ENCODE measurements at regions of chr2 and their contacts with region 1.

Region 1: GRCh38 chr2:176638167-176639015 is 369.1 kb downstream of the MTX2 start:
- DNase-seq: peak in 1 of 2 experiments; percentile 78
- H3K4me3 ChIP-seq: peak overlapping the region; percentile 37; the same call in 1 of the 2 replicates
- H3K27ac ChIP-seq: no peak overlapping the region
- H3K4me1 ChIP-seq: no peaks in the 10 kb centered on the region
- H3K27me3 ChIP-seq: no peaks in the 10 kb centered on the region; the same call in 1 of the 2 replicates
- CTCF ChIP-seq: peak; percentile 81

Region 2: DNA sequence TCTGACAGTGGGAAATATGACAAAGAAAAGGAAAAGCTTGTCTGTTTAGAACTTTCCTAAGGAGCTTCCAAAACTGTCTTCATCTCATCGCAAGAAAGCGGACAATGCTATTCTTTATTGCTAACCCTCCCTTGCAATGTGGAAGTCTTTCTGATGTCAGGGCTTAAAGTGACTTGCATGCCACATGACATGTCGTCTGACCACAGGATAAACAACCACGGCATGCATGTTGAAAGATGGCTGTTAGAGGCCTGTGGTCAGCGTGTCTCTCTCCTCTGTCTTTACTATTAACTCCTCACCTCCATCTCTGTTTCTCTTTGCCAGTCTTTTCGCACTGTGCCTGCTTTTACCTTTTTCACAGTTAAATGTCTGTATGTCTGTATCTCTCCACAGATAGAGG is 1026.1 kb before region 1 on chr2:
- CTCF ChIA-PET with region 1: no interaction called
- POLR2A ChIA-PET with region 1: no interaction called
- intact Hi-C with region 1: no loop called
- DNase-seq: no peak
- H3K4me3 ChIP-seq: no peak overlapping the region
- H3K27ac ChIP-seq: no peak overlapping the region
- H3K4me1 ChIP-seq: no peaks in the 10 kb centered on the region
- H3K27me3 ChIP-seq: peaks cover 30% of the 10 kb centered on the region
- CTCF ChIP-seq: no peak

Region 3: DNA sequence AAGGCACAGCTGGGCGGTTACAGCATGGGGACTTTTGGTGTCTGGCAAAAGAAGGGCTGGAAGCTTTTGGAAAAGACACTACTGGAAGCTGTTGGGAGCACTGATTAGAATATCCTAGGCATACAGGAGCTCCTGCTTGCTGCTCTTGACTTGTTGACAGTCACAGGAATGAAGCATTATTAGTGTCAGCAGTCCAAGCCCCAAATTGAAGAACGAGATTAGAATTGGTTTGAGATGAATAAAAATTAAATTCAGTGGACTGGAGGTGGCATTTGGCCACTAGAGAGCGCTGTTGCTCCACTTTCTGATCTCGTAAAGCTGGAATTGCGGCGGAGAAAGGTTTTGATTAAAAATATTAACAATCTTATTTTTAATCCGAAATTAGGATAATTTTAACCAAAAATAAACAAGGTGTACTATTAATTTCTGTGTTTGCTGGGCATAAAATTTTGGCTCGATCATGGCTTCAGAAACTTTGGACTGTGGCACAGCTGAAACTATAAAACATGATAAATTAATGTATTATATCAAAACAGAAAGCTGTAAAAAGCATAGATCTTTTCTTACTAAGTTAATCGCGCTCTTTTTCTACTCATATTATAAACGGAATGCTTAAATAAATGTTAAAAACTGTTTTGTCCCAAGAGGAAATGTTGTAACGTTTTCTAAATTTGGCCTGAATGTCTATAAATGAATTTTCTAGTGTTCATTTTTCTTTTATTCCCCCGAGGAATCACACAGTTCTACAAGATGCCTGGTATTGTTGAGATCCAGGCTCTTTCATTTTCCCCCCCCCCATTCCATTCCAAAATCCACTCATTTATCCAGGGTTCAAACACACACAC is 511.2 kb before region 1 on chr2:
- CTCF ChIA-PET with region 1: interaction called, 7 read pairs
- POLR2A ChIA-PET with region 1: interaction called, 3 read pairs
- intact Hi-C with region 1: loop called (anchors 1 kb)
- DNase-seq: peak; percentile 43 to 67
- H3K4me3 ChIP-seq: 0 out of 2 replicates have a peak overlapping the region, but pooled peaks have one; percentile 3
- H3K27ac ChIP-seq: no peak overlapping the region
- H3K4me1 ChIP-seq: no peaks in the 10 kb centered on the region
- H3K27me3 ChIP-seq: peaks cover 52% of the 10 kb centered on the region
- CTCF ChIP-seq: peak; percentile 100

Region 4: GRCh38 chr2:176454893-176455811 is 183.2 kb before region 1 on chr2:
- CTCF ChIA-PET with region 1: interaction called, 6 read pairs
- POLR2A ChIA-PET with region 1: no interaction called
- intact Hi-C with region 1: loop called (anchors 1 kb)
- DNase-seq: peak; percentile 44 to 80
- H3K4me3 ChIP-seq: no peak overlapping the region
- H3K27ac ChIP-seq: no peak overlapping the region
- H3K4me1 ChIP-seq: no peaks in the 10 kb centered on the region
- H3K27me3 ChIP-seq: no peaks in the 10 kb centered on the region
- CTCF ChIP-seq: peak; percentile 100

Region 5: GRCh38 chr2:176526995-176527901 is 111.1 kb before region 1 on chr2:
- CTCF ChIA-PET with region 1: no interaction called
- POLR2A ChIA-PET with region 1: no interaction called
- intact Hi-C with region 1: no loop called
- DNase-seq: no peak
- H3K4me3 ChIP-seq: no peak overlapping the region
- H3K27ac ChIP-seq: no peak overlapping the region
- H3K4me1 ChIP-seq: no peaks in the 10 kb centered on the region
- H3K27me3 ChIP-seq: no peaks in the 10 kb centered on the region; the same call in 1 of the 2 replicates
- CTCF ChIP-seq: no peak

Region 6: DNA sequence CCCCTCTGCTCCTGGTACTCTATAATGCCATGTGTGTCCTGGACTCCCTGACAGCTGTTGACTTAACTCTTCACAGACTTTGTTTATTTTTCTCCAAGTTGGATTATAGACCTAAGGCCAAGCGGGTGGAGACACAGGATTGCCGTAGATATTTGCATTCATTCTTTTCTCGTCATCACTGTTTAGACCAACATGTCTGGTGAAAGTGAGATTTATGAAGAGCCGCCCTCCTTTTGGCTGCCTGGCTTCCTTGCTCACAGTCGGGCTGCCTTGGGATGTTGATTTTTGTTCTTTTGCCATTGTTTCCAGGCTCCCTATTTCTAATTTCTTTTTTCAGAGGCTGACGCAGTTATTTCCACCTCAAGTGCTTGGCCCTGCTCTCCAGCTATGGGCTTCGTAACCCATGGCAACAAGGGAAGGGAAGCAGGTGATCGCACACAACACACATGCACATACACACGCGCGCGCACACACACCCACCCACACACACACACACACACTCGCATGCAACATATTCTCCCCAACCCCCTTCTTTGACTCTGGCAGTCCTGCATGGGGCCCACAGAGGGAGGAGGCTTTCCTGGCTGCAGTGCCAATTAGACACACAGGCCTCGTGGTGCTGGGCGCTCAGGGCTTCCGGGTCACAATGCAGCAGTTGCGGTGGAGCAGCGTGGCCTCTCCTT is 72.6 kb before region 1 on chr2:
- CTCF ChIA-PET with region 1: no interaction called
- POLR2A ChIA-PET with region 1: no interaction called
- intact Hi-C with region 1: loop called (anchors 2 kb)
- DNase-seq: no peak
- H3K4me3 ChIP-seq: no peak overlapping the region
- H3K27ac ChIP-seq: no peak overlapping the region
- H3K4me1 ChIP-seq: peaks cover 23% of the 10 kb centered on the region
- H3K27me3 ChIP-seq: no peaks in the 10 kb centered on the region
- CTCF ChIP-seq: no peak

Region 7: GRCh38 chr2:176821345-176821744 is 183.0 kb after region 1 on chr2:
- CTCF ChIA-PET with region 1: no interaction called
- POLR2A ChIA-PET with region 1: no interaction called
- intact Hi-C with region 1: no loop called
- DNase-seq: no peak
- H3K4me3 ChIP-seq: no peak overlapping the region
- H3K27ac ChIP-seq: no peak overlapping the region
- H3K4me1 ChIP-seq: no peaks in the 10 kb centered on the region
- H3K27me3 ChIP-seq: peaks cover 55% of the 10 kb centered on the region
- CTCF ChIP-seq: peak; percentile 19; the same call in 1 of the 2 replicates

Region 8: GRCh38 chr2:176876493-176877103 is 238.2 kb after region 1 on chr2:
- CTCF ChIA-PET with region 1: interaction called, 11 read pairs
- POLR2A ChIA-PET with region 1: no interaction called
- intact Hi-C with region 1: no loop called
- DNase-seq: no peak
- H3K4me3 ChIP-seq: no peak overlapping the region
- H3K27ac ChIP-seq: no peak overlapping the region
- H3K4me1 ChIP-seq: no peaks in the 10 kb centered on the region
- H3K27me3 ChIP-seq: no peaks in the 10 kb centered on the region
- CTCF ChIP-seq: no peak

Region 9: DNA sequence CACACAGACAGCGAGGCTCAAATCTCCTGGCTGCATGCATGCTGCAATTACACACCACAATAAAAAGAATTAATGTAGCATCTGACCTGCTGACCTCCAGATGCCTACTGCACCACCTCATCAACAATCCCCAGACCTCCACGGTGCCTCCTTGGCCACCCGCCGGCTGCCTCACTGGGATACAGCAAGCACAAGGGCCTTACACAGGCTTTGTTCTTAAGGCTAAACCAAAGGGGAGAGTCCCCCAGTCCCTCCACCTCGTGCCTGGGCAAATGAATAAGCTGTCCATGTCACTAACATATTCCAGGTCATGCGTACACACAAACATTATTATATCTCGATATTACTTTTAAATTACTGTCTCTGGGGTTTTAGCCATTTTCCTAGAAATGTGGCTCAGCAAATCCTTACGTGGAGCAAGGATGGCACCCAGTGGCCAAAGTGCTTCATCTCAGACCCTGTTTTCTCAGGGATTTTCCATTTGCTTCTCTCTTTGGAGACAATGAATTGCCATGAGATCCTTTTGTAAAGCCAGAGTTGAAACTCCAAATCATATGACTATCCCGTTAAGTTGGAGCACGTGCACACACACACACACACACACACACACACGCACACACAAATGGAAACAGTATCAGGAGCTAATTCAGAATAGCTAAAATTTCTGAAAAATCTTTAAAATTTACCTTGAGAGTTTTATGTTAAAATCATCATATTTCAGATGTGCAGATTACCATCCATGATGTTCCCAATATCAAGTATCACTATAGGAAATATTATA is 1120.4 kb after region 1 on chr2:
- CTCF ChIA-PET with region 1: no interaction called
- POLR2A ChIA-PET with region 1: interaction called, 16 read pairs
- intact Hi-C with region 1: no loop called
- DNase-seq: peak in 1 of 2 experiments; percentile 53
- H3K4me3 ChIP-seq: no peak overlapping the region
- H3K27ac ChIP-seq: no peak overlapping the region
- H3K4me1 ChIP-seq: no peaks in the 10 kb centered on the region
- H3K27me3 ChIP-seq: no peaks in the 10 kb centered on the region
- CTCF ChIP-seq: peak; percentile 76